CD4-positive, alpha-beta T cell (primary cell): ENCODE measurements at regions of chr19 and their contacts with region 1.

Region 1: DNA sequence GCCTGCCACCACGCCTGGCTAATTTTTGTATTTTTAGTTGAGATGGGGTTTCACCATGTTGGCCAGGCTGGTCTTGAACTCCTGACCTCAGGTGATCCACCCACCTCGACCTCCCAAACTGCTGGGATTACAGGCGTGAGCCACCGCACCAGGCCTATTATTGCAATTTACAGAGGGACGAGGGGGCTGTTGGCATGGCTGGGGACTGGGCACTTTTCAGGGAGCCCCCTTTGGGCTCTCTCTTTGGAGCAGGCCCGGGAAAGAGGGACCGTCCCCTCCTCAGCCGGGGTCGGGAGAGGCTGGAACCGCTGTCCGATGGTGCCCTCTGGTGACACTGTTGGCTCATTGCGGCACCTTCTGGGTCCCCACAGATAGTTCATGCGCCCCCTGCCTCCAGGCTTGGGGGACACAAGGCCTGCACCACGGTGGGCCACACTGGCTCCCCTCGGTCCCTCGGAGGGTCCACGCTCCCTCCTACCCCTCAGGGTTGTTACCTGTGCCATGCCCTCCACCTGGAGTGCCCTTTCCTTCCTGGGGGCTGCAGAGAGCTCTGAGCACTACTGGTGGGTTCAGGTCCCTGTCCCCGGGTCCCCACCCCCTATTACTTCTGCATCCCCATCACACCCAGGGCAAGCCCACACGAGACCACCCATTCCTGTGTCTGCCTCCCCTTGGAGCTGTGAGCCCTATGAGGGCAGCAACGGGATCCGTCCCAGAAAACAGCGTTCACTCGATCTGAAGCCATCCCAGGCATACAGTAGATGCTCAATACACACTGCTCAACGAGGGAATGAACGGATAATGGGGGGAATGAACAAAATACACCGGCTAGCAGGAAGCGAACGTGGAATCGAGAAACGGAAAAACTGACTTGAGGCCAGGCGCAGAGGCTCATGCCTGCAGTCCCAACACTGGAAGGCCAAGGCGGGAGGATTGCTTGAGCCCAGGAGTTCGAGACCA is 12.5 kb downstream of the FEM1A start:
- DNase-seq: peak; percentile 39 to 84 (median 58)
- ATAC-seq: peak; percentile 99
- H3K4me3 ChIP-seq: no peak overlapping the region
- H3K4me3 Mint-ChIP-seq: no peak overlapping the region
- H3K27ac ChIP-seq: no peak overlapping the region
- H3K27ac Mint-ChIP-seq: no peak overlapping the region
- H3K4me1 ChIP-seq: peaks cover 7% of the 10 kb centered on the region
- H3K4me1 Mint-ChIP-seq: no peaks in the 10 kb centered on the region
- H3K27me3 ChIP-seq: no peaks in the 10 kb centered on the region
- H3K27me3 Mint-ChIP-seq: no peaks in the 10 kb centered on the region
- CTCF ChIP-seq: peak; percentile 84

Region 2: DNA sequence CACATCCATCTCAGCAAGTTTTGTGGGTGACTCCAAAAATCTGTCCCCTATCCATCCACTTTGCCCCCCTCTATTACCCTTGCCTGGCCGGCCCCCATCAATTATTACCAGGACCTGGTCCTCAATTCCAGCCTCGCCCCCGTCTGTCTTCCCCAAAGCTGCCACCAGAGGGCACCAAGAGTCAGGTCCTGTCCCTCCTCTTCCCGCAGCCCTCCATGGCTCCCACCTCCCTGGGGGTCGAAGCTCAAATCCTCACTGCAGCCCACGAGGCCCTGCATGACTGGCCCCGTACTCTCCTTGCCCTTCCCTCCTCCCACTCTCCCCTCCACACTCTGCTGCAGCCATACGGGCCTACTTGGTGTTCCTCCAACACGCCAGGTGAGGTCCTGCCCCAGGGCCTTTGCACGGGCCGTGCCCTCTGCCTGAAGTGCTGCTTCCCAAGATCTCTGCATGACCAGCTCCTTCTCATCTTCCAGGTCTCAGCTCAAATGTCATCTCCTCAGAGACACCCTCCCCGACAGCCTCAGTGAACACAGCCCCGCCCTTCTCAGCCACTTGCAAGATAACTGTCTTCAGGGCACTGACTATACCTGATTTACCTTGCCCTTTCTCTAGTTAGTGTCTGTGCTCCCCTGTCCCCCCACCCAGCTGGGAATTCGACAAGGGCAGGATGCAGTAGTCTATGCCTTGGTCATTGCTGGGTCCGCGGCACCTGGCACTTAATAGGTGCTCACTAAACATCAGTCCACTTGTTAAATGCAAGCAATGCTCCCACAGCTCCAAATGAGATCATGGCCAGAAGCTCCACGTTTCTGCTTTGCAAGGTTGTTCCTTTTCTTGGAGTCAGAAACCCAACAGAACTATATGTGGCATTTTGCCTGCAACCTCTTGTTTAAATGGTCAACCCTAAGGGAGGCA is 227.7 kb before region 1 on chr19:
- CTCF ChIA-PET with region 1: no interaction called
- POLR2A ChIA-PET with region 1: no interaction called
- intact Hi-C with region 1: loop called in 1 of 2 experiments (anchors 10 kb)
- DNase-seq: peak; percentile 52 to 78 (median 64)
- ATAC-seq: peak; percentile 62
- H3K4me3 ChIP-seq: no peak overlapping the region
- H3K4me3 Mint-ChIP-seq: no peak overlapping the region
- H3K27ac ChIP-seq: no peak overlapping the region
- H3K27ac Mint-ChIP-seq: no peak overlapping the region
- H3K4me1 ChIP-seq: no peaks in the 10 kb centered on the region
- H3K4me1 Mint-ChIP-seq: no peaks in the 10 kb centered on the region
- H3K27me3 ChIP-seq: peaks cover 39 to 58% of the 10 kb centered on the region in 2 experiments
- H3K27me3 Mint-ChIP-seq: peaks cover 47% of the 10 kb centered on the region
- CTCF ChIP-seq: peak; percentile 65

Region 3: GRCh38 chr19:4732680-4733114 is 71.3 kb before region 1 on chr19:
- CTCF ChIA-PET with region 1: interaction called, 4 read pairs
- POLR2A ChIA-PET with region 1: interaction called, 3 read pairs
- intact Hi-C with region 1: loop called (anchors 1 kb)
- DNase-seq: peak; percentile 11 to 83 (median 40)
- ATAC-seq: peak; percentile 93
- H3K4me3 ChIP-seq: no peak overlapping the region
- H3K4me3 Mint-ChIP-seq: no peak overlapping the region
- H3K27ac ChIP-seq: no peak overlapping the region
- H3K27ac Mint-ChIP-seq: no peak overlapping the region
- H3K4me1 ChIP-seq: peaks cover 6% of the 10 kb centered on the region
- H3K4me1 Mint-ChIP-seq: peaks cover 6% of the 10 kb centered on the region
- H3K27me3 ChIP-seq: no peaks in the 10 kb centered on the region
- H3K27me3 Mint-ChIP-seq: peaks cover 14% of the 10 kb centered on the region
- CTCF ChIP-seq: peak; percentile 75

Region 4: GRCh38 chr19:4841366-4841704 is 37.3 kb after region 1 on chr19:
- CTCF ChIA-PET with region 1: no interaction called
- POLR2A ChIA-PET with region 1: no interaction called
- intact Hi-C with region 1: no loop called
- DNase-seq: no peak
- ATAC-seq: no peak
- H3K4me3 ChIP-seq: no peak overlapping the region
- H3K4me3 Mint-ChIP-seq: no peak overlapping the region
- H3K27ac ChIP-seq: no peak overlapping the region
- H3K27ac Mint-ChIP-seq: peak overlapping the region; percentile 60
- H3K4me1 ChIP-seq: peaks cover 13% of the 10 kb centered on the region
- H3K4me1 Mint-ChIP-seq: peaks cover 6% of the 10 kb centered on the region
- H3K27me3 ChIP-seq: no peaks in the 10 kb centered on the region
- H3K27me3 Mint-ChIP-seq: no peaks in the 10 kb centered on the region
- CTCF ChIP-seq: no peak

Region 5: DNA sequence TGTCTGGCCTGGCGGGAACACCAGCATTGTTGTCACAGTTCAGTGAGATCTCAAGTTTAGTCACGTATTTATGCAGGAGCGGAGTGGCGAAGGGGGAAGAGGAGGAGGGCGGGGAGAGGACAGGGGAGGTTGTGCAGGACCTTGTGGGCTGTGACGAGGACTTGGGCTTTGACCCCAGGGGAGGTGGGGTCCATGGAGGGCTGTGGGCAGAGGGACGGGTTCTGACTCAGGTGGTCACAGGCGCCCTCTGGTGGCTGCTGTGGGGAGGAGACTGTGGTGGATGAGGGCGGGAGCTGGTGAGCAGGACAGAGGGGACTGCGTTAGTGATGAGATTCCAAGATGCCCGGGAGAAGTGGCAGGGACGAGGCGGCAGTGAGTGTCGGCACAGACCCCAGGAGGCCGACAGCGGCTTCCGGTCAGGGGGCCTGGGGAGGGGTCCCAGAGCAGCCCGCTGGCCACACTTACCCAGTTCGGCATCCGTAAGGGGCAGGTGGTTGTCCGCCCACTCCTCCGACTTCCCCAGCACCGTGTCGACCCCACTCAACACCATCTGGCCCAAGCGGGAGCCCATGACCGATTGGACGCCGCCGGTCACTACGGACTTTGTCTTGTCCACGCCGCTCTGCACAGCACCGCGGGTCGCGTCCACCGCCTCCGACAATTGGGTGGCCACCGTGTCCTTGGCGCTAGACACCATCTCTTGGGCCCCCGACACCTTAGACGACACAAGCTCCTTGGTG is 47.7 kb after region 1 on chr19:
- CTCF ChIA-PET with region 1: interaction called, 76 read pairs
- POLR2A ChIA-PET with region 1: interaction called, 12 read pairs
- intact Hi-C with region 1: loop called (anchors 1 kb)
- DNase-seq: peak; percentile 63 to 85 (median 70)
- ATAC-seq: peak; percentile 84
- H3K4me3 ChIP-seq: no peak overlapping the region
- H3K4me3 Mint-ChIP-seq: no peak overlapping the region
- H3K27ac ChIP-seq: no peak overlapping the region
- H3K27ac Mint-ChIP-seq: no peak overlapping the region
- H3K4me1 ChIP-seq: peaks cover 5% of the 10 kb centered on the region
- H3K4me1 Mint-ChIP-seq: no peaks in the 10 kb centered on the region
- H3K27me3 ChIP-seq: no peaks in the 10 kb centered on the region
- H3K27me3 Mint-ChIP-seq: no peaks in the 10 kb centered on the region
- CTCF ChIP-seq: peak; percentile 73